Activated CD4-positive, alpha-beta memory T cell treated with anti-CD3 and anti-CD28 coated beads for 36 hours (primary cell): ENCODE measurements at regions of chr12 and their contacts with region 1.

Region 1: GRCh38 chr12:95117178-95117599 is 43.8 kb upstream of the NR2C1 start:
- DNase-seq: peak; percentile 53
- H3K4me3 Mint-ChIP-seq: no peak overlapping the region
- H3K27ac Mint-ChIP-seq: no peak overlapping the region
- H3K4me1 Mint-ChIP-seq: peaks cover 5% of the 10 kb centered on the region
- H3K27me3 Mint-ChIP-seq: no peaks in the 10 kb centered on the region

Region 2: GRCh38 chr12:94898388-94898787 is 218.8 kb before region 1 on chr12:
- CTCF ChIA-PET with region 1: no interaction called
- POLR2A ChIA-PET with region 1: no interaction called
- intact Hi-C with region 1: no loop called
- DNase-seq: no peak
- H3K4me3 Mint-ChIP-seq: no peak overlapping the region
- H3K27ac Mint-ChIP-seq: no peak overlapping the region
- H3K4me1 Mint-ChIP-seq: no peaks in the 10 kb centered on the region
- H3K27me3 Mint-ChIP-seq: no peaks in the 10 kb centered on the region

Region 3: GRCh38 chr12:95066091-95066855 is 50.9 kb before region 1 on chr12:
- CTCF ChIA-PET with region 1: no interaction called
- POLR2A ChIA-PET with region 1: no interaction called
- intact Hi-C with region 1: no loop called
- DNase-seq: no peak
- H3K4me3 Mint-ChIP-seq: no peak overlapping the region
- H3K27ac Mint-ChIP-seq: no peak overlapping the region
- H3K4me1 Mint-ChIP-seq: peaks cover 12% of the 10 kb centered on the region
- H3K27me3 Mint-ChIP-seq: no peaks in the 10 kb centered on the region

Region 4: GRCh38 chr12:95336390-95337067 is 219.3 kb after region 1 on chr12:
- CTCF ChIA-PET with region 1: interaction called, 5 read pairs
- POLR2A ChIA-PET with region 1: no interaction called
- intact Hi-C with region 1: loop called (anchors 1 kb)
- DNase-seq: no peak
- H3K4me3 Mint-ChIP-seq: no peak overlapping the region
- H3K27ac Mint-ChIP-seq: no peak overlapping the region
- H3K4me1 Mint-ChIP-seq: peaks cover 3% of the 10 kb centered on the region
- H3K27me3 Mint-ChIP-seq: peaks cover 2% of the 10 kb centered on the region

Region 5: GRCh38 chr12:95368931-95369330 is 251.7 kb after region 1 on chr12:
- CTCF ChIA-PET with region 1: no interaction called
- POLR2A ChIA-PET with region 1: no interaction called
- intact Hi-C with region 1: no loop called
- DNase-seq: no peak
- H3K4me3 Mint-ChIP-seq: no peak overlapping the region
- H3K27ac Mint-ChIP-seq: no peak overlapping the region
- H3K4me1 Mint-ChIP-seq: no peaks in the 10 kb centered on the region
- H3K27me3 Mint-ChIP-seq: peaks cover 6% of the 10 kb centered on the region

Region 6: GRCh38 chr12:95532851-95533250 is 415.7 kb after region 1 on chr12:
- CTCF ChIA-PET with region 1: interaction called, 81 read pairs
- POLR2A ChIA-PET with region 1: interaction called, 4 read pairs
- intact Hi-C with region 1: loop called (anchors 1 kb)
- DNase-seq: peak; percentile 33
- H3K4me3 Mint-ChIP-seq: no peak overlapping the region
- H3K27ac Mint-ChIP-seq: no peak overlapping the region
- H3K4me1 Mint-ChIP-seq: peaks cover 8% of the 10 kb centered on the region
- H3K27me3 Mint-ChIP-seq: no peaks in the 10 kb centered on the region

Region 7: GRCh38 chr12:95538656-95539055 is 421.5 kb after region 1 on chr12:
- CTCF ChIA-PET with region 1: interaction called, 81 read pairs
- POLR2A ChIA-PET with region 1: interaction called, 4 read pairs
- intact Hi-C with region 1: loop called (anchors 1 kb)
- DNase-seq: no peak
- H3K4me3 Mint-ChIP-seq: no peak overlapping the region
- H3K27ac Mint-ChIP-seq: no peak overlapping the region
- H3K4me1 Mint-ChIP-seq: peaks cover 2% of the 10 kb centered on the region
- H3K27me3 Mint-ChIP-seq: no peaks in the 10 kb centered on the region

Region 8: DNA sequence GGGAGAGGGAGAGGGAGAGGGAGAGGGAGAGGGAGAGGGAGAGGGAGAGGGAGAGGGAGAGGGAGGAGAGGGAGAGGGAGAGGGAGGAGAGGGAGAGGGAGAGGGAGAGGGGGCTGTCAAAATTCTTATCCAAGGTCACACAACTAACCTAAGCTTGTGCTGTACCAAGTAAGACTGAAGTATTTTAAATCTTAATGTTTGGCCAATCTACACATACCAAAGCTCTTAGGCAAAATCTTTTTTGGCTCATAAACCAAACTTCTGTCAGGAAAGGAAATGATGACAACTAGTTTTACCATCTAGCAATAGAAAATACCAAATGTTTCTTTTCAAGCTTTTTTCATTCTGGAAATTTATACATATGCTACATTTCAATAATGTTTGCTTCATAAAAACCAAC is 791.4 kb after region 1 on chr12:
- CTCF ChIA-PET with region 1: no interaction called
- POLR2A ChIA-PET with region 1: no interaction called
- intact Hi-C with region 1: no loop called
- DNase-seq: no peak
- H3K4me3 Mint-ChIP-seq: no peak overlapping the region
- H3K27ac Mint-ChIP-seq: no peak overlapping the region
- H3K4me1 Mint-ChIP-seq: no peaks in the 10 kb centered on the region
- H3K27me3 Mint-ChIP-seq: no peaks in the 10 kb centered on the region